Activated B cell treated with CpG ODN at 0.5 μM for 24 hours (primary cell): ENCODE measurements at regions of chr7 and their contacts with region 1.

Region 1: DNA sequence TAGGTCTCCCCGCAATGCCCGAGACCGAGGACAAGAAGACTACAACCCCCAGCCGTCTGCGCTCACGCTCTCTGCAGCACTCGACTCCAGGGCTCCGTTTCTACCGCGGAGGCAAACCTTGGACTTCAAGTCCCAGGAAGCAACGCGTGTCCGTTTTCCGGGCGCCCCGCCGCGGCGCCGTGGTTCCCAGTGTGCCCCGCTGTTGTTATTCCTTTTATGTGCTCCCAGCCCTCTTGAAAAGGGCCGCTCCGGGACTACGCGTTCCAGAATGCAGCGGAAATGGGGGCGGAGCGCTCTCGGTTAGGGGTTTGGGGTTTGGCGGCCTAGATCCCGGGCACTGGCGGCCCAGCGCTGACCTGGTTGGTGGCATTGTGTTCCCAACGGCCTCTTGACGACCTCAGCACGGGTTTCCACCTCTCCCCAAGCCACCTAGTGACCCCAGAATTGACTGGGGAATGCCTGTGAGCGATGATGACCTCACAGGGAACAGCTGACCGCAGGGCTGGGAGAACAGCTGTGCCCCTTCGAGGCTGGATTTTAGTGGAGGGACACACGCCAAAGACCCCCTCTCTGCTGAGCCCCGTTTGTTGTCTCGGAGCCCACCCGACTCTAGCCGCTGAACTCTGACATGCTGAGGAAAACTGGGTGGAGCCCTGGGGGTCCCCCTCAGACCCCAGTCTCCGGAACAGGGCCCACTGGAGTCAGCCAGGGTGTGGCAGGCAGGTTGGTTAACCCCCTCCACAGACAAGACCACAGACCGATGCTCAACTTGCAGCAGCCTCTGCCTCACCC is 488 bp upstream of the CDK5 start:
- DNase-seq: peak; percentile 91
- ATAC-seq: peak; percentile 93
- H3K4me3 Mint-ChIP-seq: peak overlapping the region; percentile 92
- H3K27ac Mint-ChIP-seq: peak overlapping the region; percentile 89
- H3K4me1 Mint-ChIP-seq: peaks cover 36% of the 10 kb centered on the region
- H3K27me3 Mint-ChIP-seq: no peaks in the 10 kb centered on the region
- CTCF ChIP-seq: no peak

Region 2: DNA sequence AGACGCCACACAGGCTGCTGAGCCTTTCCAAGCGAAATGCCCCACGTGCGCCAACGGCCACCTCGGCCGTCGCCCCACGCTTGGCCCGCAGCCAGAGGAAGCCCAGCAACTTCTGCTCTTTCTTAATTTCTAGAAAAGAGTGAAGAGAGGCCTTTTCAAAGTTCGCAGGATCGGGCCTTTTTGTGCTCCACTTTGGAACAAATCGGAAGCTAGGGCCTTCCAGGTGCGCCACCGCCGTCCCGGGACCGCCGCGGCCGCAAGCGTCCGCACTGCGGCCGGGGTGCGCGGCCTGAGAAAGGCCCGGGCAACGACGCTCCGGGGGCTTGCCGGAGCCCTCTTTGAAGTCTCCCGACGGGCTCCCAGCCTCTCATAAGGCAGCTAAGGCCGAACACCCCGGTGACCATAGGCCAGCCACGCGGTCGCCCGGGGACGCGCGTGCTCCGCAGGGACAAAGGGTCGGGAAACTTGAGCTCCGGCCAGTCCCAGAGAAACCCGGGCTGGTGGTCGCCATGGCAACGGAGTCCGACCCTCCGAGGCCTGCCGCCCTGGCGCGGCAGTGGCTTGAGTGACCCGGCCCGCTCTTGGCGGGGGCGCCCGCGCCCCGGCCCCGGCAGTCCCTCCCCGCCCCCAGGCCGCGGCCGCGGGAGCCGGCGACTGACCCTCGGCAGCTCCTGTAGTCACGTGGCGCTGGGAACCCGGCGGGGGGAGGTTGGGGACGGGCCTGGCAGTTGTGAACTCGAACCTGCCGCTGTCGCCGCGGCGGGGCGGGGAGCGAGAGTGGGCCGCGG is 689.9 kb before region 1 on chr7 and contains the start of gene REPIN1:
- CTCF ChIA-PET with region 1: no interaction called
- POLR2A ChIA-PET with region 1: no interaction called
- intact Hi-C with region 1: loop called (anchors 2 kb)
- DNase-seq: peak; percentile 85
- ATAC-seq: peak; percentile 43
- H3K4me3 Mint-ChIP-seq: peak within 1 kb of the TSS; percentile 95
- H3K27ac Mint-ChIP-seq: peak within 1 kb of the TSS; percentile 95
- H3K4me1 Mint-ChIP-seq: peaks cover 72% of the 10 kb centered on the region
- H3K27me3 Mint-ChIP-seq: no peaks in the 10 kb centered on the region
- CTCF ChIP-seq: no peak
- total RNA-seq, gene REPIN1: 106 and 116 TPM in 2 replicates

Region 3: GRCh38 chr7:151028131-151028947 is 29.8 kb before region 1 on chr7 and contains the start of gene ABCB8:
- CTCF ChIA-PET with region 1: interaction called, 3 read pairs
- POLR2A ChIA-PET with region 1: interaction called, 19 read pairs
- intact Hi-C with region 1: loop called (anchors 1 kb)
- DNase-seq: peak; percentile 94
- ATAC-seq: peak; percentile 93
- H3K4me3 Mint-ChIP-seq: peak within 1 kb of the TSS; percentile 96
- H3K27ac Mint-ChIP-seq: peak within 1 kb of the TSS; percentile 97
- H3K4me1 Mint-ChIP-seq: peaks cover 22% of the 10 kb centered on the region
- H3K27me3 Mint-ChIP-seq: peaks cover 9% of the 10 kb centered on the region
- CTCF ChIP-seq: no peak
- total RNA-seq, gene ABCB8: 38.9 and 46.5 TPM in 2 replicates

Region 4: GRCh38 chr7:151110941-151111645 is 52.9 kb after region 1 on chr7:
- CTCF ChIA-PET with region 1: no interaction called
- POLR2A ChIA-PET with region 1: interaction called, 5 read pairs
- intact Hi-C with region 1: loop called (anchors 1 kb)
- DNase-seq: peak; percentile 55
- ATAC-seq: peak; percentile 81
- H3K4me3 Mint-ChIP-seq: no peak overlapping the region
- H3K27ac Mint-ChIP-seq: no peak overlapping the region
- H3K4me1 Mint-ChIP-seq: peaks cover 2% of the 10 kb centered on the region
- H3K27me3 Mint-ChIP-seq: peaks cover 27% of the 10 kb centered on the region
- CTCF ChIP-seq: no peak

Region 5: GRCh38 chr7:151232091-151232916 is 174.1 kb after region 1 on chr7 and contains the start of gene CHPF2:
- CTCF ChIA-PET with region 1: no interaction called
- POLR2A ChIA-PET with region 1: no interaction called
- intact Hi-C with region 1: loop called (anchors 1 kb)
- DNase-seq: peak; percentile 85
- ATAC-seq: peak; percentile 93
- H3K4me3 Mint-ChIP-seq: peak within 1 kb of the TSS; percentile 99
- H3K27ac Mint-ChIP-seq: peak within 1 kb of the TSS; percentile 96
- H3K4me1 Mint-ChIP-seq: peaks cover 35% of the 10 kb centered on the region
- H3K27me3 Mint-ChIP-seq: no peaks in the 10 kb centered on the region
- CTCF ChIP-seq: no peak
- total RNA-seq, gene CHPF2: 32.4 and 41.2 TPM in 2 replicates